ENCODE measurements at regions of chr5 and their contacts with region 1.

Region 1: DNA sequence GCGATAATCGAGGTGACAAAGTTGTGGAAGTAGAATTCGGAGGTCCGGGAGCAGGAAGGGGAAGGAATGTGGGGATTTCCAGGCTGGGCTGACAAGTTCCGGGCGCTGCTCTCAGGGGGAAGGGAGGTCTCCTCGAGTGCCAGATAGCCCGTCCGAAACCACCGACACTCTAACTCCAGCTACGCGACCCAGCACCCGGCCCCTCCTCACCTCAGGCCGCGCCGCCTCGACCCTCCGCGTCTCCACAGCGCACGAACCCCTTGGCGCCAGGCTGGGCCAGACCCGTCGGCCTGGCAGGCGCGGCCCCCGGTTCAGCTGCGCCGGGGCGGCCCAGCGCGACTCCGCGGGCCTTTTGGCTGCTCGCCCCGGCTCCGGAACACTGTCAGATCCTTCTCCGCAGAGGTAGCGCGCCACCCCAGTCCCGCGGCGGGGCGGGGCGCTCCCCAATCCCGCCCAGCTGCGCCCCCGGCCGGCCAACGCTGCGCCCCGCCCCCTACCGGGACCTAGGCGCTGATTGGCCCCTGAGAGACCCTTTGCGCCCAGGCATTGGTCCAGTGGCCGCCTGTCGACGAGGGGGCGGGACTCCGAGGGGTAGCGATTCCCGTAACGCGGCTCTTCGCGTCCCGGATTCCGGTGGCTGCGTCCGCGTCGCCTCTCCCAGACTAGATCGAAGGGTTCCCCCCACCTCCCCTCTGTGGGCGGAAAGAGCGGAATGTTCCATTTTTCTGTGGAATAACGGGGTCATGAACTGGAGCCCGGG is at the start of gene IL6ST:
- DNase-seq: peak; percentile 97
- H3K4me3 Mint-ChIP-seq: peak within 1 kb of the TSS; percentile 100
- H3K27ac Mint-ChIP-seq: peak within 1 kb of the TSS; percentile 100
- H3K4me1 Mint-ChIP-seq: peaks cover 53% of the 10 kb centered on the region
- H3K27me3 Mint-ChIP-seq: no peaks in the 10 kb centered on the region
- total RNA-seq, gene IL6ST: 93.4 to 103 TPM

Region 2: DNA sequence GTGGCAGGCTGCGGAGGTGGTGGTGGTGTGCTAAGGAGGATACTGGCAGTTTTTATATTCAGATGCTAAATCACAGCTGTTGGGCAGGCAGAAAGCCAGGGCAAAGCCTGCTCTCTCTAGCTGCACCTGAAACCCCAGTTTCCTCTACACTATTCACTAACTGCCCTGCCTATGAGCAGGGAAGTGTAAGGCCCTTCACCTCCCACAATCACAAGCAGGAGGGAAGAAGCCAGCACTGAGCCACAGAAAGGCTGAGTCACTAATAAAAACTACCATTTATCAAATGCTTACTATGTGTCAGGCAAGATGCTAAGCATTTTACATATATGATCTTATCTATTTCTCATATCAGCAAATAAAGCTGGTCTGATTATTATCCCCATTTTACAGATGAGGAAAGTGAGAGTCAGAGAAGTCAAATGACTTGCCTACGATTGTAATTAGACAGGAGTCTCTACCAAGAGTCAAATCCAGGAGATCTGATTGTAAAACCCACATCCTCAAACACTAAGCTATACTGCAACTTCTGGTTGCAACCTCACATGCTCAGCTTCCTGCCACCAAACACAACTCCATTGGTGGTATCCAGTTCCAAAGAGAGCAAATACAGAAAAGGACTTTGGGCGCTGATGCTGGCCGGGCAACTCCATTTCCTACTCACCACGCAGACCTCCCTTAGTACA is 17.7 kb after region 1 on chr5:
- CTCF ChIA-PET with region 1: interaction called, 5 read pairs
- intact Hi-C with region 1: loop called (anchors 1 kb)
- DNase-seq: peak; percentile 66
- H3K4me3 Mint-ChIP-seq: peak overlapping the region; percentile 33
- H3K27ac Mint-ChIP-seq: peak overlapping the region; percentile 77
- H3K4me1 Mint-ChIP-seq: peaks cover 41% of the 10 kb centered on the region
- H3K27me3 Mint-ChIP-seq: no peaks in the 10 kb centered on the region

Region 3: DNA sequence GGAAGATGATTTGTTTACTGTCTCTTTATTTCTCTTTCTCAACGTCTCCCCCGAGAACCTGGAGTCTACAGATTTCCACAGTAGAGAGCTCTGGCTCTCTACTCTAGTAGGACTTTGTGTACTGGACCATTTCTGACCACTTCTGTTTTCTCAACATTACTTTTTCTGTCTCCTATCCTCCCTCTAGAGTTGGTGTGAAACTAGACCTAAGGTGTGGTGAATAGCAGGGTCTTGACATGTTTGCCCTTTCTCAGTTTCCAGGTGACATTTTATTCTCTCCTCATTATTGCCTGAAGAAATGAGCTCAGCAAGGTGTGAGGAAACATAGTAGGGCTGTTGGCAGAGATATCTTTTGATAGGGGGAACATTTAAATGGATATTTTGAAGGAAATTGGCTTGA is 62.1 kb after region 1 on chr5:
- CTCF ChIA-PET with region 1: no interaction called
- intact Hi-C with region 1: loop called (anchors 1 kb)
- DNase-seq: no peak
- H3K4me3 Mint-ChIP-seq: peak overlapping the region; percentile 56
- H3K27ac Mint-ChIP-seq: peak overlapping the region; percentile 81
- H3K4me1 Mint-ChIP-seq: peaks cover 73% of the 10 kb centered on the region
- H3K27me3 Mint-ChIP-seq: no peaks in the 10 kb centered on the region

Region 4: DNA sequence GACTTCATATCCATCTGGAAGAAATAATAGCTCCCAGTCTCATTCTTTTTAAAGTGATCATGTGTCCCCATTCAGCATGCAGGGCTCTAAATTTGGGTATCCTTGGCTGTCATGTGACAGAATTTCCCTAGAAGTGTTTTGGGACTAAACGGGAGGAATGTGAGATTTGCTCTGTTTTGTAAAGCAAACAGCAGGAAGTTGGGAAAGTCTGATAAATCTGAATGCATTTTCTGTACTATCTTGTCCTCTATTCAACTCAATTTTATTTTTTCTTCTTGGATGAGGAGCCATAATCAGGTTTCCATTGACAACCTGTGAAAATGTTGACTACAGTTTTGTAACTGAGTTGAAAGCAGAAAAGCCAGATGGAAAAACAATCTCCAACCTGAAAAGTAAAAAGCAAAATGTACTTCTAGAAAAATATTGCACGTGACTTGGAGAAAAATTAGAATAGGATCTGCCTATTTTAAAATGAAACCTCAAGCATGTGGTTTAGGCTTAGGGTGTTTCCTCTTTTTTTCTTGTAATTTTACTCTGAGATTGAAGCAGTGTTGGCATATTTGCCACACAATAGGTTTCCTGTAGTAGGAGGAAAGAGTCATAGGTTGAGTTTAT is 76.2 kb after region 1 on chr5:
- CTCF ChIA-PET with region 1: interaction called, 6 read pairs
- intact Hi-C with region 1: loop called (anchors 1 kb)
- DNase-seq: no peak
- H3K4me3 Mint-ChIP-seq: peak overlapping the region; percentile 59
- H3K27ac Mint-ChIP-seq: peak overlapping the region; percentile 82
- H3K4me1 Mint-ChIP-seq: peaks cover 86% of the 10 kb centered on the region
- H3K27me3 Mint-ChIP-seq: no peaks in the 10 kb centered on the region

Region 5: GRCh38 chr5:56088967-56089829 is 94.4 kb after region 1 on chr5:
- CTCF ChIA-PET with region 1: interaction called, 4 read pairs
- intact Hi-C with region 1: loop called (anchors 1 kb)
- DNase-seq: peak; percentile 85
- H3K4me3 Mint-ChIP-seq: no peak overlapping the region
- H3K27ac Mint-ChIP-seq: peak overlapping the region; percentile 86
- H3K4me1 Mint-ChIP-seq: peaks cover 73% of the 10 kb centered on the region
- H3K27me3 Mint-ChIP-seq: no peaks in the 10 kb centered on the region

Region 6: GRCh38 chr5:56155992-56156584 is 161.3 kb after region 1 on chr5:
- CTCF ChIA-PET with region 1: interaction called, 3 read pairs
- intact Hi-C with region 1: loop called (anchors 1 kb)
- DNase-seq: no peak
- H3K4me3 Mint-ChIP-seq: peak overlapping the region; percentile 79
- H3K27ac Mint-ChIP-seq: peak overlapping the region; percentile 91
- H3K4me1 Mint-ChIP-seq: peaks cover 88% of the 10 kb centered on the region
- H3K27me3 Mint-ChIP-seq: no peaks in the 10 kb centered on the region